Left ventricle myocardium superior (tissue), 1 donor: ENCODE measurements at regions of chr15 and their contacts with region 1.

Region 1: DNA sequence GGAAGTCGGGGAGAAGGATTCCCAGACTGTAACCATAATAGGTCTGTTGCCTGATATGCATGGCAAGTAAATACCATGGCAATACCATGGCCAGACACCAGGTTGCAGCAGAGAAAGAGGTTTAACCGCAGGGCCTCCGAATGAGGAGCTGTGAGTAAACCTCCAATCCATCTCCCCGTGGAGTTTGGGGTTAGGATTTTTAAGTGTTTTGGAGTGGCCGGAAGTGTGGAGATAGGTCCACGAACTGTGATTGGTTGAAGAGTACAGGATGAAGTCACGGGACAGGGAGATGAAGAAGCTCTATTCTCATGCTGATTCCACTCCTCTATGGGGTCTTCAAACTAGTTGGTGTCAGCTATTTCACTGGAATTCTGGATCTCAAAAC is 127.9 kb downstream of the ST8SIA2 start:
- DNase-seq: peak; percentile 65
- ATAC-seq: peak; percentile 96

Region 2: GRCh38 chr15:92683232-92683834 is 161.7 kb after region 1 on chr15:
- intact Hi-C with region 1: loop called (anchors 1 kb)
- DNase-seq: peak; percentile 55
- ATAC-seq: peak; percentile 60

Region 3: DNA sequence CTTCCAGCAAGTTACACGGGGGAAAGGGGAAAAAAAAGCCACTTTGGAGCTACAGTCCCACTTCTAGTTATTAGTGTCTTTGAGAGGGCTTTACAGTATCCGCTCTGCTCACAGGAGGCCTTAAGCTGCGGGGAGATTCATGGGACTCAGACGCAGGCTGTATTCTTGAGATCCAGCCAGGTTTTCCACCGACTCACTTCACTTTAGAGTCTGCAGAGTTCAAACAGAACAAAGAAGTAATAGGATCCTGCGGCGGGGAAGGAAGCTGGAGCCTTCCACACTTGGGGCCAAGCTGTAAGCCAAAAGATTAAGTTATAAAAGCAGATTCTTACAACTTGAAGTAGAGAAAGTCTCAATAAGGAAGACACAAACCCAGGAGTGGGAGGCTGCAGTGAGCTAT is 194.1 kb after region 1 on chr15:
- intact Hi-C with region 1: loop called (anchors 2 kb)
- DNase-seq: no peak
- ATAC-seq: no peak